GM12878 (cell line): ENCODE measurements at regions of chr11 and their contacts with region 1.

Region 1: GRCh38 chr11:65497141-65498041 is 1.5 kb upstream of the MALAT1 start:
- DNase-seq: peak; percentile 95
- ATAC-seq: peak; percentile 71
- H3K4me3 ChIP-seq: peak overlapping the region; percentile 77
- H3K27ac ChIP-seq: peak overlapping the region; percentile 100
- H3K4me1 ChIP-seq: peaks cover 37% of the 10 kb centered on the region
- H3K27me3 ChIP-seq: no peaks in the 10 kb centered on the region
- CTCF ChIP-seq: no peak
- EP300 ChIP-seq: peak; percentile 86 to 98
- POLR2A ChIP-seq: peak; percentile 69
- RAD21 ChIP-seq: peak; percentile 24; the same call in 1 of the 2 replicates

Region 2: DNA sequence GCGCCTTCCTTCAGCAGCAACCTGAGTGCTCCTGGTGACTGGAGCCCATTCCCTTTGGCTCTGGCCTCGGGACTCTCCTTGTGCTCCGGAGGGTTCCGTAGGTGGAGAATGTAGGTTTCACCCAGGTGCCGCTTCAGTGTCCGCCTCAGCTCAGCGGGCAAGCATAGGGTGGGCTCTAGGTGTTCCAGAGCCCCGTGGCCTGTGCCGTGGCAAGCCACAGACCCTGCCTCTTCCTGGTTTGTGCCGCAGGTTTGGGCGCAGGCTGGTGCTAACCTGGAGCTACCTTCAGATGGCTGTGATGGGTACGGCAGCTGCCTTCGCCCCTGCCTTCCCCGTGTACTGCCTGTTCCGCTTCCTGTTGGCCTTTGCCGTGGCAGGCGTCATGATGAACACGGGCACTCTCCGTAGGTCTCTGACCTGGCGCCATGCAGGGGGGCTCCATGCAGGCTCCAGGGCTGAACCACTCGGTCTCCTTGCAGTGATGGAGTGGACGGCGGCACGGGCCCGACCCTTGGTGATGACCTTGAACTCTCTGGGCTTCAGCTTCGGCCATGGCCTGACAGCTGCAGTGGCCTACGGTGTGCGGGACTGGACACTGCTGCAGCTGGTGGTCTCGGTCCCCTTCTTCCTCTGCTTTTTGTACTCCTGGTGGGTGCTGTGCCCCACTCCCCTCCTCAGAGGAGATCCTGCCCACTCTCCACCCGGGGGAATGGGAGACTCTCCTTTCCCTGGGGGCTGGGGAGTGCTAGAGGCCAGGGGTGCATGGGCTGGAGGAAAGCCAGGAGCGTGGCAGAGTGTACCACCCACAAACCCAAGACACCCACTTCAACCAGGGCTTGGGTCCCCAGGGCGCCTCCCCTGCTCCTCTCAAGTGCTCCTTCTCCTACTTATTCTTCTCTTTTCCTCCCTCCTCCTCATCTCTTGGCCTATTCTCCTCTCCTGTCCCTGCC is 904.0 kb before region 1 on chr11:
- CTCF ChIA-PET with region 1: no interaction called
- POLR2A ChIA-PET with region 1: no interaction called
- RAD21 ChIA-PET with region 1: no interaction called
- SMC1A ChIA-PET with region 1: no interaction called
- in situ Hi-C with region 1: no loop called
- intact Hi-C with region 1: no loop called
- DNase-seq: no peak
- ATAC-seq: no peak
- H3K4me3 ChIP-seq: no peak overlapping the region
- H3K27ac ChIP-seq: no peak overlapping the region
- H3K4me1 ChIP-seq: no peaks in the 10 kb centered on the region
- H3K27me3 ChIP-seq: no peaks in the 10 kb centered on the region
- CTCF ChIP-seq: no peak
- EP300 ChIP-seq: no peak
- POLR2A ChIP-seq: no peak
- RAD21 ChIP-seq: no peak

Region 3: DNA sequence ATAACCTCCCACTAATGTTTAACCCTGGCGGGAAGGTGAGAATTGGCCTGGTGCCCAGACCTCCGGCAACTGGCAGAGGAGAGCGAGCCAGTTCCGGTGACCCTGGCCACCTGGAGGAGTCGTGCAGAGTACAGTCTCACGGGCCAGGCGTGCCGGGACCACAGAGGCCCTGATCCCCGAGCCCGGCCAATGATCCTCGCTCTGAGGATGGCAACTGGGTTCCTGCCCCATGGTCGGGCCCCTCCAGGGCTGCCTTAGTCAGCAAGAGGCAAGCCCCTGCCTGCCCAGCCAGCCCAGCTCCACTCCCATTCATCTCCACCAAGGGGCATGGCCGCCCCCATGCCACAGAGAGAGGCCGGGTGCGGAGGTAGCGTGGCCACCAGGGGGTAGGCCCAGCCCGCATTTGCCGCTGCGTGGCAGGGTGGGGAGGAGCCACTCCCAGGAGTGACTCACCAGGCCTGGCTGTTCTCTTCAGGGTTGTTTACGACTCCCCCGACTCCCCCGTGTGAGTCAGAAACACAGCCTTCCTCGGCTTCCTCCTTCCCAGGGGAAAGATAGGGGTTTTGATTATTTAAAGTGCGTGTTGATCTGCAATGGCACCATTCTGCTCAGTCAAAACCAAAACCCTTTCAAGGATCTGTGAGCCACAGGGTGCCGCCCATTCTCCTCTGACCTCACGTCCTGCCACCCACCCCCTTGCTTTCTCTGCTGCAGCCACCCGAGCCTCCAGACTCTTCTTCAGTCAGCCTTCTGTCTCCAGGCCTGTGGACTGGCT is 115.2 kb before region 1 on chr11 and contains the start of gene SLC25A45:
- CTCF ChIA-PET with region 1: interaction called, 4 read pairs
- POLR2A ChIA-PET with region 1: interaction called, 7 read pairs
- RAD21 ChIA-PET with region 1: interaction called, 5 read pairs
- SMC1A ChIA-PET with region 1: interaction called, 4 read pairs
- in situ Hi-C with region 1: no loop called
- intact Hi-C with region 1: loop called (anchors 5 kb)
- DNase-seq: peak; percentile 84
- ATAC-seq: peak; percentile 86
- H3K4me3 ChIP-seq: peak within 1 kb of the TSS; percentile 90
- H3K27ac ChIP-seq: peak within 1 kb of the TSS; percentile 99
- H3K4me1 ChIP-seq: peaks cover 58% of the 10 kb centered on the region
- H3K27me3 ChIP-seq: no peaks in the 10 kb centered on the region
- CTCF ChIP-seq: peak; percentile 70 to 79 (median 71)
- EP300 ChIP-seq: peak in 1 of 2 experiments; percentile 24; a peak in 1 of 4 replicates
- POLR2A ChIP-seq: peak; percentile 78
- RAD21 ChIP-seq: peak; percentile 74
- polyA plus RNA-seq, gene SLC25A45: 4.1 to 9.7 TPM

Region 4: GRCh38 chr11:65429724-65430405 is 67.5 kb before region 1 on chr11:
- CTCF ChIA-PET with region 1: interaction called, 26 read pairs
- POLR2A ChIA-PET with region 1: interaction called, 323 read pairs
- RAD21 ChIA-PET with region 1: interaction called, 282 read pairs
- SMC1A ChIA-PET with region 1: interaction called, 51 read pairs
- in situ Hi-C with region 1: no loop called
- intact Hi-C with region 1: no loop called
- DNase-seq: no peak
- ATAC-seq: peak; percentile 7
- H3K4me3 ChIP-seq: peak overlapping the region; percentile 95
- H3K27ac ChIP-seq: peak overlapping the region; percentile 100
- H3K4me1 ChIP-seq: peaks cover 42% of the 10 kb centered on the region
- H3K27me3 ChIP-seq: no peaks in the 10 kb centered on the region
- CTCF ChIP-seq: no peak
- EP300 ChIP-seq: no peak
- POLR2A ChIP-seq: peak; percentile 80
- RAD21 ChIP-seq: no peak

Region 5: GRCh38 chr11:65440831-65441499 is 56.4 kb before region 1 on chr11:
- CTCF ChIA-PET with region 1: interaction called, 5 read pairs
- POLR2A ChIA-PET with region 1: interaction called, 50 read pairs
- RAD21 ChIA-PET with region 1: interaction called, 19 read pairs
- SMC1A ChIA-PET with region 1: interaction called, 5 read pairs
- in situ Hi-C with region 1: no loop called
- intact Hi-C with region 1: loop called (anchors 2 kb)
- DNase-seq: peak; percentile 98
- ATAC-seq: peak; percentile 69
- H3K4me3 ChIP-seq: no peak overlapping the region
- H3K27ac ChIP-seq: peak overlapping the region; percentile 89
- H3K4me1 ChIP-seq: peaks cover 52% of the 10 kb centered on the region
- H3K27me3 ChIP-seq: no peaks in the 10 kb centered on the region
- CTCF ChIP-seq: no peak
- EP300 ChIP-seq: peak; percentile 81 to 84; a peak in 3 of 4 replicates
- POLR2A ChIP-seq: peak; percentile 47; the same call in 1 of the 2 replicates
- RAD21 ChIP-seq: no peak

Region 6: DNA sequence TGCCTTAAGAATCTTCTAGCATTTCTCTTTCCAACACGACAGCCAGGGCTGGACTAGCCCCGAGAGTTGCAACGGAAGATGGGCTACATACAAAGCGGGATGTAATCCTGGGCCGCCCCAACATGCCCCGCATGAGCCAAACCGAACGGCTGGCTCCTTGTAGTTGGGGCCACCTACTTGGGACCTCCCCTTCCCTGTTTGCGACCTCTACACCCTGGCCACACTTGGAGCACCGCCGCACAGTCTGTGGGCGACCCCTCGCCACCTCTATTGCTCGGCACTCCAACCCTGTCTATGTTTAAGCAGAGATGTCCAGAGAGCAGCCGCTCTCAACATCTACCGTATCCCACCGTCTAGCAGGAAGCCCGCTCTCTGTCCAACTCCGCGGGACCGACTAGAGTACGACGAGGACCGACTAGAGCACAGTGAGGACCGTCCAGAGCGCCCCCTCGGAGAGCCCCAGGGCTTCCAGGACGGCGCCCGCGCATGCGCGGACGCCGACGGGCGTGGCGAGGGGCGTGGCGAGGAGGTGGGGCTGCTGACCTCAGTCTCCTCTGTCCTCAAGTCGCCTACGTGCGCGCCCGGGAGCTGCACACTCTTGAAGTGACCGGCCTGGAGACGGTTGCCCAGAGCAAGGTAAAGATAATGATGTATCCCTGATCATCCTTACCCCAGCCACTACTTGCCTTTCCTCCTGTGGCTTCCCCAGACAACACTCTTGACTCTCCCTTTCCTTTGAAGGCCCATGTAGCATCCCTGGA is 42.5 kb before region 1 on chr11:
- CTCF ChIA-PET with region 1: interaction called, 3 read pairs
- POLR2A ChIA-PET with region 1: interaction called, 20 read pairs
- RAD21 ChIA-PET with region 1: interaction called, 9 read pairs
- SMC1A ChIA-PET with region 1: interaction called, 7 read pairs
- in situ Hi-C with region 1: no loop called
- intact Hi-C with region 1: loop called (anchors 5 kb)
- DNase-seq: peak; percentile 77
- ATAC-seq: peak; percentile 82
- H3K4me3 ChIP-seq: peak overlapping the region; percentile 80
- H3K27ac ChIP-seq: peak overlapping the region; percentile 93
- H3K4me1 ChIP-seq: peaks cover 25% of the 10 kb centered on the region
- H3K27me3 ChIP-seq: no peaks in the 10 kb centered on the region
- CTCF ChIP-seq: peak; percentile 12 to 40 (median 17); a peak in 4 of 6 replicates
- EP300 ChIP-seq: 0 out of 4 replicates have a peak, but pooled peaks of 1 of the 2 experiments have one; percentile 23
- POLR2A ChIP-seq: peak; percentile 99
- RAD21 ChIP-seq: 0 out of 2 replicates have a peak, but pooled peaks have one; percentile 5

Region 7: DNA sequence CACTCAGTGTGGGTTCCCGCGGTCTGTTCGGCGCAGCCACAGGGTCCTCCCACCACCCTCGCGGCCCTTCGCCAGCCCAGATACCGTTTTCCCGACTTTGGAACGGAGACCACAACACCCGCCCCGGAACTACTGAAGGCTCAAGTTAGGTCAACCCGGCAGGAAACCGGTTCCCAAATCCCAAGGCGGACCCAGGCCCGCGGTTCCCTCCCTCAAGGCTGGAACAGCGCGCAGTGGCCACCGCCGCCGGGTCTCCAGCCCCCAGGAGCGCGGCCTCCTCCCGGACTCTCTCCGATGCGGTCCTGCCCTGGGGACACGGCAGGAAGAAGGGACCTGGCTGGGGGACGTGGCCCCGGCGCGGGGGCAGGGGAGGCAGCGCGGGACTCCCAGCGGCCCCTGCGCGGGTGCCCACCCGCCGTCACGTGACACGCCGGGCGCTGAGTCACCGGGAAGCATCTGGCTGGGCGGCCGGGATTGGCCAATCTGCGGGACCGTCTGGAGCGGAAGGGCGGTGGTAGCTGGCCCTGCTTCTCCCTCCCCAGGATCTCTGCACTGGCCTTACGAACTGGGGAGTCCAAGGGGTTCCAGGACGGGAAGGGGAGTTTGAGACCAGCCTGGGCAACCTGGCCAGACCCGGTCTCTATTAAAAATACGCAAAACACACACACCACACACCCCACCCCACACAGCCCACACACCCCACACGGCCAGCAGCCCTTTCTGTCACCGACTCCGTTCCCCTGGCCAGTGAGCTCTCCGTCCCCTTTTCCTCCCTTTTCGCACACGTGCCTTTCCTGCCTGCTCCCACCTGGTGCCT is 20.0 kb before region 1 on chr11:
- CTCF ChIA-PET with region 1: interaction called, 728 read pairs
- POLR2A ChIA-PET with region 1: interaction called, 429 read pairs
- RAD21 ChIA-PET with region 1: interaction called, 208 read pairs
- SMC1A ChIA-PET with region 1: interaction called, 481 read pairs
- in situ Hi-C with region 1: no loop called
- intact Hi-C with region 1: loop called (anchors 2 kb)
- DNase-seq: no peak
- ATAC-seq: peak; percentile 88
- H3K4me3 ChIP-seq: peak overlapping the region; percentile 79
- H3K27ac ChIP-seq: peak overlapping the region; percentile 100
- H3K4me1 ChIP-seq: peaks cover 26% of the 10 kb centered on the region
- H3K27me3 ChIP-seq: no peaks in the 10 kb centered on the region
- CTCF ChIP-seq: no peak
- EP300 ChIP-seq: 0 out of 4 replicates have a peak, but pooled peaks of 1 of the 2 experiments have one; percentile 26
- POLR2A ChIP-seq: peak; percentile 91
- RAD21 ChIP-seq: no peak